Ascending aorta (tissue), 2 donors: ENCODE measurements at regions of chr14 and their contacts with region 1.

Region 1: GRCh38 chr14:94364037-94364436 is 24.4 kb downstream of the SERPINA1 start:
- DNase-seq: peak in 1 of 2 donors; percentile 43
- H3K4me3 ChIP-seq: no peak overlapping the region
- H3K27ac ChIP-seq: no peak overlapping the region
- H3K4me1 ChIP-seq: no peaks in the 10 kb centered on the region
- H3K27me3 ChIP-seq: no peaks in the 10 kb centered on the region
- CTCF ChIP-seq: no peak

Region 2: DNA sequence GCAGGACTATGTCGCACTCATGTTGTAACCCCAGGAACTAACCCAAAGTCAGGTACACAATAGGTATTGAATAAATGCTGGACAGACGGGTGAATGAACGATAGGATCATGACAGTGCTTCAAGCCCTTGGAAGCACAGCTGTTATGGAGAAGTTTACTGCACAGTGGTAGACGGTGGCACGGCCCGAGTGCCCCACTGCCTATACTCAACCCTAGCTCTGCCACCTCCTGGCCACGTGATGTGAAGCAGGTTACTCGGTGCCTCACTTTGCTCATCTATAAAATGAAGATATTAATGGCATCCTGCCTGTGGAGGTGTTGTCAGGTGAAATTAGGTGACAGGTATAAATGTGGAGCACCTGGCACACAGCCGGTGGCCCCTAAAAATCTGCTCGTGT is 393.5 kb before region 1 on chr14:
- intact Hi-C with region 1: no loop called
- DNase-seq: no peak
- H3K4me3 ChIP-seq: peak overlapping the region; percentile 43 to 68
- H3K27ac ChIP-seq: peak overlapping the region; percentile 95
- H3K4me1 ChIP-seq: peaks cover 11 to 69% of the 10 kb centered on the region in 2 donors
- H3K27me3 ChIP-seq: no peaks in the 10 kb centered on the region
- CTCF ChIP-seq: peak in 2 of 3 experiments; percentile 27 to 33

Region 3: GRCh38 chr14:94380225-94381148 is 16.4 kb after region 1 on chr14:
- intact Hi-C with region 1: loop called (anchors 1 kb)
- DNase-seq: peak in 1 of 2 donors; percentile 38
- H3K4me3 ChIP-seq: no peak overlapping the region
- H3K27ac ChIP-seq: no peak overlapping the region
- H3K4me1 ChIP-seq: no peaks in the 10 kb centered on the region
- H3K27me3 ChIP-seq: no peaks in the 10 kb centered on the region
- CTCF ChIP-seq: no peak